ENCODE measurements at regions of chr1 and their contacts with region 1.

Region 1: GRCh38 chr1:235513495-235514366 is 9.5 kb upstream of the B3GALNT2 start:
- DNase-seq: peak; percentile 73
- ATAC-seq: peak; percentile 82
- H3K4me3 ChIP-seq: no peak overlapping the region
- H3K27ac ChIP-seq: no peak overlapping the region
- H3K4me1 ChIP-seq: no peaks in the 10 kb centered on the region
- H3K27me3 ChIP-seq: no peaks in the 10 kb centered on the region
- CTCF ChIP-seq: peak; percentile 92
- POLR2A ChIP-seq: no peak
- RAD21 ChIP-seq: peak; percentile 89

Region 2: DNA sequence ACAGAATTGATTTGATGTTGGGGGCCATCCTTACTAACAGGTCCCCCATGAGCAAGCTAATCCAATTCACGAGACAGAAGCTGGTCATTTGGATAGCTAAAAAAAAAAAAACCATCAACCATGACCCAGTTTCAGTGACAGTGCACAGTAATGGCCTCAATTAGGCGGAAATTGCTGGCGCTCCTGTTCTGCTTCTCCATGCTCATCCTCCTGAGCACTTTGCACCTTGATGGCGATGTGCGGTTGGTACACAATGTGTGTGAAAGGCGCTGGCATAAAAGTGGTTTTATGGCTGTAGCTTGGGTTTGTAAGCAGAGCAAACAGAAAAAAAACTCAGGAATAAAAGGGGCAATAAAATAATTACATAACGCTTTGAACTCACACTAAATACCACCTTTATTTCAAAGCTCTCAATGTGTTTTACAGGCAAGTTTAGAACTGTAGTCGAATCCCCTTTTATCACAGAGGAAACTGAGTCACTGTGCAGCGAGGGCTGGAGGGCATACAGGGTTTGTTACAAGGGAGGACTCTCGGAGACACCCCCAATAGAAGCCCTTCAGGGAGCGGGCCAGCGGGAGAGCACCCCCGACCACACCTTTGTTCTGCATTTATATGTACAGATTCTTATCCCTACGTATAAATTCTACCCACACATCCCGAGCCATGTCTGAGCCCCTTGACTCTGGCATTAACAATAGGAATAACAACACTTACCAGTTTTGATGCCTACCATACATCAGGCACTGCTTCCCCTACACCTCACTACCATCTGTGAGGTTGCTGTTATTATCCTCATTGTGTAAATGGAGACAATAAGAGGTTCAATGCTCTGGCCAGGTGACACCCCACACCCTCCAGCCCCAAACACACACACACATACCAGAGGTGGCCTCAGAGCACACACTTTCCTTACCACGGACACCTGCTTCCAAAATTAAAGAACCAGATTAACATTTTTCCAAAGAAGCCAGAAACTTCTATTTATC is 690.2 kb before region 1 on chr1:
- CTCF ChIA-PET with region 1: no interaction called
- POLR2A ChIA-PET with region 1: no interaction called
- dilution Hi-C with region 1: no loop called
- in situ Hi-C with region 1: no loop called
- intact Hi-C with region 1: no loop called
- DNase-seq: no peak
- ATAC-seq: no peak
- H3K4me3 ChIP-seq: no peak overlapping the region
- H3K27ac ChIP-seq: no peak overlapping the region
- H3K4me1 ChIP-seq: peaks cover 8% of the 10 kb centered on the region; the same call in 1 of the 2 replicates
- H3K27me3 ChIP-seq: no peaks in the 10 kb centered on the region
- CTCF ChIP-seq: no peak
- POLR2A ChIP-seq: no peak
- RAD21 ChIP-seq: no peak

Region 3: DNA sequence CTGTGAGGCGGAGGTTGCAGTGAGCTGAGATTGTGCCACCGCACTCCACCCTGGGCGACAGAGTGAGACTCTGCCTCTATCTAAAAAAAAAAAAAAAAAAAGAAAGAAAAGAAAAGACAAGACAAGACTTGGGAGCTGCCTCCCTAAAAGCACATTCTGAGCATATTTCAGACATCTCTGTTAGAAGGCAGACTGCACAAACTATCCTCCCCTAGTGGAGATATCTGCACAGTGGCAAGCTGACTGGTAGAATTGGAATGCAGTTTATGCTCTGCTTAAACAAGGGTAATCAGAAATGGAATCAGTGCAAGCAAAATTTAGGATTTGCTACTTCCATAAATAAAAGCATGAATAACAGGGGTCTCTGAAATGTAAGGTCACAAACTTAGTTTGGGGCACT is 104.1 kb after region 1 on chr1:
- CTCF ChIA-PET with region 1: no interaction called
- POLR2A ChIA-PET with region 1: no interaction called
- dilution Hi-C with region 1: no loop called
- in situ Hi-C with region 1: no loop called
- intact Hi-C with region 1: loop called (anchors 5 kb)
- DNase-seq: peak; percentile 77
- ATAC-seq: peak; percentile 99
- H3K4me3 ChIP-seq: no peak overlapping the region
- H3K27ac ChIP-seq: peak overlapping the region; percentile 22; the same call in 1 of the 2 replicates
- H3K4me1 ChIP-seq: peaks cover 10% of the 10 kb centered on the region
- H3K27me3 ChIP-seq: no peaks in the 10 kb centered on the region; the same call in 1 of the 2 replicates
- CTCF ChIP-seq: peak; percentile 56
- POLR2A ChIP-seq: no peak
- RAD21 ChIP-seq: peak; percentile 37

Region 4: DNA sequence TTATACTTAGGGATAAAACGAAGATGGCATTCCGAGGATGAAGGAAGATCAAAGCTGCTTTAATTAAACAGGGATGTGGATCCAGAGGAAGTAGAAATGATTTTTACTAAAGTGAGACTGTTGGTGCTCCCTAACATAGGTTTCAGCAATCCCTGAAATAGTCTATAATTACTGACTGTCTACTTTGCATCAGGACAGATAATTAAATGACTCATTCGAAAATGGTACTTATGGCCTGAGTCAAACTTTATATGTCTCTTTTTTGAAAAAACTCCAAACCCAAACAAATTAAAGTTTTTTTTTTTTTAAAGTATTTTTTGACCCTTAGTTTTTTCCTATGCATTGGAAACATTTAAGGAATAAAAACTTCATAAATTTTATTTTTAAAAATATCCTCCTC is 262.7 kb after region 1 on chr1:
- CTCF ChIA-PET with region 1: interaction called, 6 read pairs
- POLR2A ChIA-PET with region 1: no interaction called
- dilution Hi-C with region 1: no loop called
- in situ Hi-C with region 1: loop called (anchors 5 kb)
- intact Hi-C with region 1: no loop called
- DNase-seq: peak; percentile 23
- ATAC-seq: no peak
- H3K4me3 ChIP-seq: no peak overlapping the region
- H3K27ac ChIP-seq: no peak overlapping the region
- H3K4me1 ChIP-seq: no peaks in the 10 kb centered on the region
- H3K27me3 ChIP-seq: no peaks in the 10 kb centered on the region
- CTCF ChIP-seq: no peak
- POLR2A ChIP-seq: no peak
- RAD21 ChIP-seq: no peak

Region 5: DNA sequence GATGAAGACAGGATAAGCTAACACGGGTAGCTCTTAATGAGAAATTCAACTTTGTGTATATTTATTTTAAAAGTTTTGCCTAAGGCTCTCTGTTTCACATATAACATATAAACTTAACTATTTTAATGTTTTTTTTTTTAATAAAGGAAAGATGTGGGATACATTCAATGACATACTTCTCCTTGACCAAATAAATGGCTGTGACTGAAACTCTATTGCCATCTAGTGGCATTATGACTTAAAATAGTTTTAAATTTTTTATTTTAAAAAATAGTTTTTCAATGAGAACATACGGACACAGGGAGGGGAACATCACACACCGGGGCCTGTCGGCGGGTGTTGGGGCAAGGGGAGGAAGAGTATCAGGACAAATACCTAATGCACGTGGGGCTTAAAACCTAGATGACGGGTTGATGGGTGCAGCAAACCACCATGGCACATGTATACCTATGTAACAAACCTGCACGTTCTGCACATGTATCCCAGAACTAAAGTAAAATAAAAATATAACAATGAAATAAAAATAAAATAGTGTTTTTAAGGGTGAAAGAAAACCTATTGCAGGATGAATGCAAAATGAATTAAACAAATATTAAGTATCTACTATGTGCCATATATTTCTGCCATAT is 269.5 kb after region 1 on chr1:
- CTCF ChIA-PET with region 1: interaction called, 9 read pairs
- POLR2A ChIA-PET with region 1: no interaction called
- dilution Hi-C with region 1: no loop called
- in situ Hi-C with region 1: loop called (anchors 5 kb)
- intact Hi-C with region 1: loop called (anchors 1 kb)
- DNase-seq: peak; percentile 73
- ATAC-seq: peak; percentile 78
- H3K4me3 ChIP-seq: no peak overlapping the region
- H3K27ac ChIP-seq: no peak overlapping the region
- H3K4me1 ChIP-seq: peaks cover 6% of the 10 kb centered on the region
- H3K27me3 ChIP-seq: no peaks in the 10 kb centered on the region
- CTCF ChIP-seq: peak; percentile 70
- POLR2A ChIP-seq: 0 out of 2 replicates have a peak, but pooled peaks have one; percentile 31
- RAD21 ChIP-seq: peak; percentile 80

Region 6: GRCh38 chr1:235843461-235843961 is 329.8 kb after region 1 on chr1:
- CTCF ChIA-PET with region 1: interaction called, 3 read pairs
- POLR2A ChIA-PET with region 1: no interaction called
- dilution Hi-C with region 1: no loop called
- in situ Hi-C with region 1: no loop called
- intact Hi-C with region 1: loop called (anchors 2 kb)
- DNase-seq: peak; percentile 68
- ATAC-seq: peak; percentile 96
- H3K4me3 ChIP-seq: no peak overlapping the region
- H3K27ac ChIP-seq: no peak overlapping the region
- H3K4me1 ChIP-seq: no peaks in the 10 kb centered on the region; the same call in 1 of the 2 replicates
- H3K27me3 ChIP-seq: no peaks in the 10 kb centered on the region
- CTCF ChIP-seq: peak; percentile 64
- POLR2A ChIP-seq: no peak
- RAD21 ChIP-seq: peak; percentile 72